Breast epithelium (tissue), 4 donors: ENCODE measurements at regions of chr14 and their contacts with region 1.

Region 1: DNA sequence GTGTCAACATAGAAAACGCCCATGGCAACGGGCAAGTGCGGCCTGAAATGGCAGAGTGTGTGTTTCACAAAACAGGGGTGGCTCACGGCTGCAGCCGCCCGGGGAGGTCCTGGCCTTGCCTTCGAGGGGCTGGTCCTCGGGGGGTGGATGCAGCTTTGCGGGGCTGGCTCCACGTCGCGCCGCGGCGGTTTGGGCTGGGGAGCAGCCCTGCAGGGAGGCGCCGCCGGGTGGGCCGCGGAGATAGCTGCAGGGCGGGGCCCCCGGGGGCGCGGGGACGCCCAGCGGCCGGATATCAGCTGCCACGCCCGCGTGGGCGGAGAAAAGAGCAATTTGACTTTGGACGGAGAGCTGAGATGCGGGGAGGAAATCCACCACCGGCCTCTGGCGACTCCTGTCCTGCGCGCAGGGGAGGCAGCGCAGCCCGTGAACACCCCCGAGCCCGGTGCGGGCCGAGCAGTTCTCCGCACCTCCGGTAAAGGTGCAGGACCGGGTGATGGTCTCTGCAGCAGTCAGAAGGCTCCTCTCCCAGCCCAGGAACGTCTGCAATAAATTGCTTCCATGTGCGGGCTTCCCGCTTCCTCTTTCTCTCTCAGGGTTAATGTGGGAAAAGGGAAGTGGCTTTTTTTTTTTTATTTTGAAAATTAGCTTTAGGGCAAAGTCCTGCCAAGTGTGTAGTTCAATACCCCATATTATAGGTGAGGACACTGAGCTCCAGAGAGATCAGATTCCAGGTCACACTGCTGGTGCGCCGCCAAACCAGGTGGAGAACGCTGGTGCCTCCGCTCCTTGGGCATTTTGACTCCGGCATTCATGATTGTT is 110.5 kb downstream of the ARF6 start:
- DNase-seq: peak; percentile 59 to 75
- H3K4me3 ChIP-seq: peak overlapping the region; percentile 49 to 63 (median 58)
- H3K27ac ChIP-seq: peak overlapping the region; percentile 96 to 98
- H3K4me1 ChIP-seq: peaks cover 25 to 29% of the 10 kb centered on the region in 2 donors
- H3K27me3 ChIP-seq: no peaks in the 10 kb centered on the region
- CTCF ChIP-seq: no peak
- POLR2A ChIP-seq: no peak

Region 2: DNA sequence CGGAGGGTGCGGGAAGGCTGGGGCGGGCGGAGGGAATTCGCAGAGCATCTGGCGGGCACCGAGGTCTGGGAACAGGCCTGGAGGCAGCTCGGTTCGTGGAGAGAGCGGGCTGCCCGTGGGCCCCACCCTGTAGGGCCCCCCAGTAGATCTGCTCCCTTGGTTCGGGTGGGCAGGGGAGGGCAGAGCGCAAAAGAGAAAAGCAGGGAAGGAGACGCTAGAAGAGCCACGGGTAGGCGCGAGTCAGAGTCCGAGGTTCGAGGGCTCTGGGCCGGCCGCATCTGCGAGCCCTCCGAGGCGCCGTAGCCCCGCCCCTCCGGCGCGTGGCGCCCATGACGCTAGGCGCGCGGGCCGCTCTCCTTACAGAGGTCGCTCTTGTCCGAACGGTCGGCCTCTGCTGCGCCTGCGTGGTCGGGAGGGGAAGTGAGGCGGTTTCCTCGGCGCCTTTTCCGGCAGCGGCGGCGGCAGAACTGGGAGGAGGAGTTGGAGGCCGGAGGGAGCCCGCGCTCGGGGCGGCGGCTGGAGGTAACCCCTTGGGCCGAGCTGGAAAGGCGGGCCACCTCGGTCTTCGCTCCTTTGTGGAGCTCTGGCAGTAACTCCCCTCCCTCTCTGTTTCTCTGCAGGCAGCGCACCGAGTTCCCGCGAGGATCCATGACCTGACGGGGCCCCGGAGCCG is 110.7 kb before region 1 on chr14 and contains the start of gene ARF6:
- intact Hi-C with region 1: loop called (anchors 10 kb)
- DNase-seq: peak; percentile 97 to 99
- H3K4me3 ChIP-seq: peak within 1 kb of the TSS; percentile 90 to 98 (median 92)
- H3K27ac ChIP-seq: peak within 1 kb of the TSS; percentile 99
- H3K4me1 ChIP-seq: peaks cover 0 to 18% of the 10 kb centered on the region in 2 donors
- H3K27me3 ChIP-seq: no peaks in the 10 kb centered on the region
- CTCF ChIP-seq: peak in 2 of 3 donors; percentile 8 to 14
- POLR2A ChIP-seq: peak; percentile 80
- total RNA-seq, gene ARF6: 39.2 to 63.8 (median 44.2) TPM

Region 3: DNA sequence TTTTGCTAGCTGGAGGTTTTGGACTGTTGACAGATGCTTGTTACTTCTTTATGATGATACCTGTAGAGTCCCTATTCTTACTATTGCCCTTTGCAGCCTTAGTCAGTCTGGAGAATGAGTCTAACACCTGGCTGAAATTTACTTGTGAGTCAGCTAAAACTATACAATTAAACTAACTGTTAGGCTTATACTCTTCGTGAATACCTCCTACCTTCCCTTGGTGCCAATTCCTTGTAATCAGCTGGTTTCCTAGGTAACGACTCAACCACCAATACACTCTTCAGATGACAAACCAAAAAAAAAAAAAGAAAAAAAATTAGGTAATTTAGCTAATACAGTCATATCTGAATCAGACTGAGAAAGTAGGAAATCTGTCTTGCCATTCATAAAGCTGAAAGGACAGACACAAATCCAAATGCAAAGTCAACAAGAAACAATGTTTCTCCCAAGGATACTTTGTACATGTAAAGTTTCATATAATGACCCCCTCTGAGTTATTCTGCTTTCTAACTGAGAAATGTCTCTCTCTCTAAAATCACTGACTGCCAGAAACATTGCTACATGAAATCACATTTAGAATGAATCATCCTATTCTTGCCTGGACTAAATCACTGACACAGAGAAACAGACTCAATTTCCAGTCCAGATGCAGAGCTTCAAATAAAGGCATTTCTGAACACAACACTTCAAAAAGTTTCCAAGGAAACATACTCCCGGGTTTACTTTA is 449.7 kb after region 1 on chr14:
- intact Hi-C with region 1: no loop called
- DNase-seq: no peak
- H3K4me3 ChIP-seq: no peak overlapping the region
- H3K27ac ChIP-seq: peak overlapping the region in 1 of 2 donors; percentile 30
- H3K4me1 ChIP-seq: no peaks in the 10 kb centered on the region
- H3K27me3 ChIP-seq: no peaks in the 10 kb centered on the region
- CTCF ChIP-seq: no peak
- POLR2A ChIP-seq: no peak